IMR-90 (cell line): ENCODE measurements at regions of chrX and their contacts with region 1.

Region 1: GRCh38 chrX:12974796-12975669 is at the start of gene TMSB4X:
- DNase-seq: peak; percentile 74
- ATAC-seq: peak; percentile 66
- H3K4me3 ChIP-seq: peak within 1 kb of the TSS; percentile 89
- H3K27ac ChIP-seq: peak within 1 kb of the TSS; percentile 96
- H3K4me1 ChIP-seq: peaks cover 2% of the 10 kb centered on the region
- H3K27me3 ChIP-seq: no peaks in the 10 kb centered on the region
- CTCF ChIP-seq: no peak
- POLR2A ChIP-seq: peak; percentile 99
- RAD21 ChIP-seq: no peak; the same call in 1 of the 2 replicates
- total RNA-seq, gene TMSB4X: 9,222 and 11,116 TPM in 2 replicates

Region 2: GRCh38 chrX:12936947-12937346 is 38.1 kb before region 1 on chrX:
- CTCF ChIA-PET with region 1: no interaction called
- POLR2A ChIA-PET with region 1: no interaction called
- dilution Hi-C with region 1: no loop called
- in situ Hi-C with region 1: no loop called
- intact Hi-C with region 1: no loop called
- DNase-seq: no peak
- ATAC-seq: no peak
- H3K4me3 ChIP-seq: no peak overlapping the region
- H3K27ac ChIP-seq: no peak overlapping the region
- H3K4me1 ChIP-seq: no peaks in the 10 kb centered on the region
- H3K27me3 ChIP-seq: no peaks in the 10 kb centered on the region
- CTCF ChIP-seq: no peak
- POLR2A ChIP-seq: no peak
- RAD21 ChIP-seq: no peak

Region 3: GRCh38 chrX:13123857-13124345 is 148.9 kb after region 1 on chrX:
- CTCF ChIA-PET with region 1: no interaction called
- POLR2A ChIA-PET with region 1: interaction called, 5 read pairs
- dilution Hi-C with region 1: no loop called
- in situ Hi-C with region 1: no loop called
- intact Hi-C with region 1: loop called (anchors 2 kb)
- DNase-seq: peak; percentile 85
- ATAC-seq: peak; percentile 60
- H3K4me3 ChIP-seq: no peak overlapping the region
- H3K27ac ChIP-seq: peak overlapping the region; percentile 96
- H3K4me1 ChIP-seq: peaks cover 7% of the 10 kb centered on the region
- H3K27me3 ChIP-seq: no peaks in the 10 kb centered on the region
- CTCF ChIP-seq: no peak
- POLR2A ChIP-seq: no peak
- RAD21 ChIP-seq: no peak

Region 4: GRCh38 chrX:13263560-13264251 is 288.7 kb after region 1 on chrX:
- CTCF ChIA-PET with region 1: no interaction called
- POLR2A ChIA-PET with region 1: no interaction called
- dilution Hi-C with region 1: no loop called
- in situ Hi-C with region 1: no loop called
- intact Hi-C with region 1: no loop called
- DNase-seq: no peak
- ATAC-seq: no peak
- H3K4me3 ChIP-seq: no peak overlapping the region
- H3K27ac ChIP-seq: no peak overlapping the region
- H3K4me1 ChIP-seq: no peaks in the 10 kb centered on the region
- H3K27me3 ChIP-seq: no peaks in the 10 kb centered on the region
- CTCF ChIP-seq: no peak
- POLR2A ChIP-seq: no peak
- RAD21 ChIP-seq: no peak

Region 5: GRCh38 chrX:13283950-13284914 is 309.2 kb after region 1 on chrX:
- CTCF ChIA-PET with region 1: no interaction called
- POLR2A ChIA-PET with region 1: no interaction called
- dilution Hi-C with region 1: no loop called
- in situ Hi-C with region 1: no loop called
- intact Hi-C with region 1: loop called (anchors 5 kb)
- DNase-seq: peak; percentile 78
- ATAC-seq: 0 out of 2 replicates have a peak, but pooled peaks have one; percentile 21
- H3K4me3 ChIP-seq: no peak overlapping the region
- H3K27ac ChIP-seq: peak overlapping the region; percentile 25; the same call in 1 of the 2 replicates
- H3K4me1 ChIP-seq: peaks cover 11% of the 10 kb centered on the region; the same call in 1 of the 2 replicates
- H3K27me3 ChIP-seq: no peaks in the 10 kb centered on the region
- CTCF ChIP-seq: no peak
- POLR2A ChIP-seq: no peak
- RAD21 ChIP-seq: no peak

Region 6: GRCh38 chrX:13398073-13398823 is 423.2 kb after region 1 on chrX:
- CTCF ChIA-PET with region 1: no interaction called
- POLR2A ChIA-PET with region 1: interaction called, 3 read pairs
- dilution Hi-C with region 1: no loop called
- in situ Hi-C with region 1: no loop called
- intact Hi-C with region 1: loop called (anchors 1 kb)
- DNase-seq: peak; percentile 100
- ATAC-seq: peak; percentile 94
- H3K4me3 ChIP-seq: no peak overlapping the region
- H3K27ac ChIP-seq: peak overlapping the region; percentile 41
- H3K4me1 ChIP-seq: peaks cover 4% of the 10 kb centered on the region
- H3K27me3 ChIP-seq: no peaks in the 10 kb centered on the region
- CTCF ChIP-seq: no peak
- POLR2A ChIP-seq: no peak
- RAD21 ChIP-seq: peak; percentile 35

Region 7: DNA sequence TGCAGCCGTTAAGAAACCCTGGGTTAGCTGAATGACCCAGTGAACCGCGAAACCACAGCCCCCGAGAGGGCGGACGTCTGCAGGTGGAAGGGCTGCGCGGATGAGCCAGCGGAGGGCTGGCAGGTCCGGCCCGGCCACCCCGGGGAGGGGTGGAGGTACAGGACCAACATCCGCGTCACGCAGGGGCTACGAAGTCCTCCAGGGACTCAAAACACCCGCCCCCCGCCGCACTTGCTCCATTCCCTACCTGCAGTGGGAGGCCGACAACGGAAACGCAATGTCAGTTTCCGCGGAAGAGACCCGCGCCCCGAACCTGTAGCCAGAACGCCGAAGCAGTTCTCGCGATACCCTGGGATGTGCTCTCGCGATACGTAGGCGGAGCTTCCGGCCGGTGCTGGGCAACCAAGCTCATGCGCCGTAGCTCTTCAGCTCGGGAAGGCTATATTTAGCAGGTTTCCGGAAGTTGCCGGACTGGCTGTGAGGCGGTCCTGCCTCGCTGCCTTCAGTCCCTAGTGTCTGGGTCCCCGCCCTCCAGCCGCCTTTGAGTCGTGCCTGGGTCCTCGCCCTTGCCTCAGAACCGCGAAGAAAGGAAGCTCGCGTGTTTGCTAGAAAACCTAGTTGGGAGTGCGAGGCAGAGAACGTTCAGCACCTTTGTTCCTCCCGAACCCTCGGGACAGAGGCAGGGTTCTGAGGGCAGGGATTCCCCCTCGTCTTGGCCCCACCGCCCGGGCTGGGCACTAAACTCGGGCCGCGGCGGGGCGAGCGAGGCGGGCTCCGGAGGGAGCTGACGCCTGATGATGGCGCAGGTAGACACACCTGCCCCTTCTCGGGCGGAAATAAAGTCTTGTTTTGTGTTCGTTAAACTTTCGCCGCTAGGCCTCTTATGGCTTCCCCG is 759.5 kb after region 1 on chrX and contains the starts of genes OFD1 and TRAPPC2:
- CTCF ChIA-PET with region 1: no interaction called
- POLR2A ChIA-PET with region 1: no interaction called
- dilution Hi-C with region 1: no loop called
- in situ Hi-C with region 1: loop called (anchors 25 kb)
- intact Hi-C with region 1: no loop called
- DNase-seq: peak; percentile 97
- ATAC-seq: peak; percentile 97
- H3K4me3 ChIP-seq: peak within 1 kb of the TSS; percentile 81
- H3K27ac ChIP-seq: peak within 1 kb of the TSS; percentile 90
- H3K4me1 ChIP-seq: no peaks in the 10 kb centered on the region
- H3K27me3 ChIP-seq: no peaks in the 10 kb centered on the region
- CTCF ChIP-seq: no peak
- POLR2A ChIP-seq: peak; percentile 95
- RAD21 ChIP-seq: peak; percentile 28; the same call in 1 of the 2 replicates
- total RNA-seq, gene OFD1: 8.4 and 10.6 TPM in 2 replicates
- total RNA-seq, gene TRAPPC2: 13.8 and 19.2 TPM in 2 replicates